ENCODE measurements at regions of chr9 and their contacts with region 1.

Region 1: DNA sequence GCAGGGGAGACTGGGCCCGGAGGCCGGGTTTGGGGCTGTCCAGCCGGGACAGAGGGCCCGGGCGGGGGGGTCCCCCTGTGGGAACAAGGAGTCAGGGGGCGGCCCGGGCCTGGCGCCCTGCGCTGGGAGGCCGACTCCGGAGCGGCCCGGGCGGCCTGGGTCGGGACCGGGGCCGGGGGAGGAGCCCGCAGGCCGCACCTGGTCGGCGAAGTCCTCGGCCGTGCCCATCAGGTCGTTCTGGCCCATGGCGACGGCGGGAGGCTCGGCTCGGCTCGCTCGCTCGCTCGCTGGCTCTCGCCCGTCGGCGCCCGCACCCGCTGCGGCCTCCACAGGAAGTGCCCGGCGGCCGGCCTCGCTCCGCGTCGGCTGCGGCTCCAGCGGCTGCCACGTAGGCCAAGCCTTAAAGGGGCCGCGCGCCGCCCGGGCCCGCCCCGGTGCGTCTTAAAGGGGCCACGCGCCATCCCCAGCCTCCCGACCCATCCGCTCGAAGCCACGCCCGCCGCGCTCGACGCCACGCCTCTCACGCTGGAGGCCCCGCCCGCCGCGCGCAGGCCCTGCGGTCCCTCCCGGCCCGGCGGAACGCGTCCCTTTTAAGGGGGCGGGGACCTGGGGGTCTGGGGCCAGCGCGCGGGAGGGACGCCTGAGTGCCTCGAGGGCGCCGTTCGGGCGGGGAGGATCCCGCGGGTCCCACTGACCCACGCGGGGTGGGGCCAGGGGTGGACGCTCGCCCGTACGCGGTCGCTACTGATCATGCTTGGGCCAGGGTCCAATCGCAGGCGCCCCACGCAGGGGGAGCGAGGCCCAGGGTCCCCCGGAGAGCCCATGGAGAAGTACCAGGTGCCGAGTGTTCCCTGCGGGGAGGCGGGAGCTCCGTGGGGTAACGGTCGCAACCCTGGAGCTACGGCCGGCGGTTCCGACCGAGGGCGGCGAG is at the starts of genes STKLD1 and SURF4:
- DNase-seq: peak; percentile 96
- H3K4me3 Mint-ChIP-seq: peak within 1 kb of the TSS; percentile 98
- H3K27ac Mint-ChIP-seq: peak within 1 kb of the TSS; percentile 97
- H3K4me1 Mint-ChIP-seq: peaks cover 33% of the 10 kb centered on the region
- H3K27me3 Mint-ChIP-seq: no peaks in the 10 kb centered on the region
- total RNA-seq, gene STKLD1: 0.35 to 0.41 TPM
- total RNA-seq, gene SURF4: 299 to 302 TPM

Region 2: GRCh38 chr9:132354637-132355355 is 1021.2 kb before region 1 on chr9 and contains the start of gene SETX:
- CTCF ChIA-PET with region 1: no interaction called
- intact Hi-C with region 1: loop called (anchors 5 kb)
- DNase-seq: peak; percentile 96
- H3K4me3 Mint-ChIP-seq: peak within 1 kb of the TSS; percentile 88
- H3K27ac Mint-ChIP-seq: peak within 1 kb of the TSS; percentile 95
- H3K4me1 Mint-ChIP-seq: peaks cover 35% of the 10 kb centered on the region
- H3K27me3 Mint-ChIP-seq: no peaks in the 10 kb centered on the region
- total RNA-seq, gene SETX: 26.4 to 26.7 TPM

Region 3: DNA sequence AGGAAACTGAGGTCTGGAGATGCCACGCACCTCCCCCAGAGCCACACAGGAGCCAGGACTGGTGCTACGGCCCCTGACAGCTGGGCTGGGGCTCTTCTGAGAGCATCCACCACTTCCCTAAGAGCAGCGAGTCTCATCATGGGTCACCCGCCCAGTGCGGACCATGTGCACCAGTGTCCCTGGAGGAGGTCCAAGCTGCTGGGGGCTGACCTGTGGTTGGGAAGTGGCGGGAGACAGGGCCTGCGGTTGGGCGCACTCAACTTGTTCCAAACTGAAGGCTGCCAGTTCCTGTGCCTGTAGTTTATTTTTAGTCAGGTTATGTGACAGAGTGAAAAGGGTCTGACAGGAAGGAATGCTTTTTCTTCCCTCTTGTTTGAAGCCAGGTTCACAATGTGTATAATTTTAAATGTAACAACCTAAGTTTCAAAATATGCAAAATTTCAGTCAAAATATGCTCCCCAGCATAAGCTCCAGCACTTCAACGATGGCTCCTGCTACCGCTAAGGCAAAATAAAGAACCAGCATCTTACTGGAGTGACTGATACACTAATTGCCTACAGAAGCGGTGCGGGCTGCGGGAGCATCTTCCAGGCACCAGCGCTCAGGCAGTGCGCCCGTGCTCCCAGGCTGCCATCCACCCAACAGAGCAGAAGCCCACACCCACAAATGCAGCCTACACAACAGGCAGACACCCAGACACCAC is 778.8 kb before region 1 on chr9:
- CTCF ChIA-PET with region 1: no interaction called
- intact Hi-C with region 1: no loop called
- DNase-seq: no peak
- H3K4me3 Mint-ChIP-seq: no peak overlapping the region
- H3K27ac Mint-ChIP-seq: no peak overlapping the region
- H3K4me1 Mint-ChIP-seq: no peaks in the 10 kb centered on the region
- H3K27me3 Mint-ChIP-seq: no peaks in the 10 kb centered on the region

Region 4: DNA sequence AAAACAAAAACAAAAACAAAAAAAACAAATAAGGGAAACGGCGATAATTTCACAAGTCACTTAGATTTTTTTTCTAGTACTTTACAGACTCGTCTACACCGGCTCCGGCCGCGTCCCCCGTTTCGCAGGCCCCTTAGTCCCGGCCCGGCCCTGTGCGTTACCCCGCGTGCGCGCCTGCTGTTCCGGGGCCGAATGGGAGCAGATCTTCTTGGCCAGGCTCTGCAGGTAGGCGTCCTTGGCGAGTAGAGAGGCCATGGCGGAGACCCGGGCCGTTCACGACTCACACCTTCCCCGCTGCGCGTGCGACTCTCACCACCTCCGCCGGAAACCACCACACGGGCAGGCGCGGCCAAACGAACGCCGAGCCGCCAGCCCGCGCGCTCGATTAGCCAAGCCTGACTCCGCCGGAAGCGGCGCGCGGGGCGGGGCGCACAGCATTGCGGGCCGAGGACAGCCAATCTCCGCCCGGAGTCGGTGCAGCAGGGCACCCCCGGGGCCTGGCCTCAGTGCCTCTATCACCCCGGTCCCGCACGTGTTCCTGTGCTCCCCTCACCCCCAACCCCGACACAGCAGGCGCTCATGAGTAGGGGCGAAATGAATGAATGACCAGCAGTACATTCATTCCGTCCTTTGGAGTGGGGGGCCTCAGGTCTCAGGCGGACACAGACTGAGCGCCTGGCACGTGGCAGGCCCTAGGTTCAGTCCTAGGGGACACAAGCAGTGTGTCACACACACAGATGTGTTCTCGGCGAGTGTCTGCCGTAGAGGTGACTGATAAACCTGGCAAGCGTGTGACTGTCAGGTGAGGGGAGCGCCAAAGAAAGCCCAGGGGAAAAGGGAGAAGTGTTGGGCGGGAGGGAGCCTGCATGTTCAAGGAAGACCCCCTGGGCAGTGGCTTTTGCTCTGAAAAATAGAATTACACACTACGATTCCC is 39.8 kb before region 1 on chr9 and contains the start of gene SURF6:
- CTCF ChIA-PET with region 1: interaction called, 5 read pairs
- intact Hi-C with region 1: loop called (anchors 1 kb)
- DNase-seq: peak; percentile 95
- H3K4me3 Mint-ChIP-seq: peak within 1 kb of the TSS; percentile 97
- H3K27ac Mint-ChIP-seq: peak within 1 kb of the TSS; percentile 87
- H3K4me1 Mint-ChIP-seq: peaks cover 40% of the 10 kb centered on the region
- H3K27me3 Mint-ChIP-seq: no peaks in the 10 kb centered on the region
- total RNA-seq, gene SURF6: 13.6 to 13.8 TPM

Region 5: DNA sequence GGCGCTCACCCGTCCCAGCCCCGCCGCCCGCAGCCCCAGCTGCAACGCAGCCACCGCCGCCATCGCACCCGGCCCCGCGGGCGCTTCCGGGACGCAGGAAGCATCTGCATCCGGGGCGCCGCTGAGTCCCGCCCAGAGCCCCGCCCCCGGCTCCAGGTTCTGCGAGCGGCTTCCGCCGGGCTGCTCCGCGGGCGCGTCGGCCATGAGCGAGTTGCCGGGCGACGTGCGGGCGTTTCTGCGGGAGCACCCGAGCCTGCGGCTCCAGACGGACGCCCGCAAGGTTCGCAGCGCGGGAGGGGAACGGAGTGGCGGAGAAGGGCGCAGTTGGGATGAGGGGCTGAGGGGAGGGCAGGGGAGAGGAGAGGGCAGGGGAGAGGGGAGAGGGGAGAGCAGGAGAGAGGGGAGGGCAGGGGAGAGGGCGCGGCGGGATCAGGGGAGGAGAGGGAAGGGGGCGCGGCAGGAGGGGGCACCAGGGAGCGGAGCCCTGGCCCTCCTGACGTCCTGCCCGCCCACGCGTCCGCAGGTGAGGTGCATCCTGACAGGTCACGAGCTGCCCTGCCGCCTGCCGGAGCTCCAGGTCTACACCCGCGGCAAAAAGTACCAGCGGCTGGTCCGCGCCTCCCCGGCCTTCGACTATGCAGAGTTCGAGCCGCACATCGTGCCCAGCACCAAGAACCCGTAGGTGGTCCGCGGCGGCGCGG is 19.4 kb before region 1 on chr9 and contains the starts of genes SURF1 and SURF2:
- CTCF ChIA-PET with region 1: interaction called, 48 read pairs
- intact Hi-C with region 1: loop called (anchors 1 kb)
- DNase-seq: peak; percentile 92
- H3K4me3 Mint-ChIP-seq: peak within 1 kb of the TSS; percentile 82
- H3K27ac Mint-ChIP-seq: peak within 1 kb of the TSS; percentile 81
- H3K4me1 Mint-ChIP-seq: peaks cover 50% of the 10 kb centered on the region
- H3K27me3 Mint-ChIP-seq: no peaks in the 10 kb centered on the region
- total RNA-seq, gene SURF1: 24.9 to 27.8 TPM
- total RNA-seq, gene SURF2: 15.0 to 16.2 TPM

Region 6: DNA sequence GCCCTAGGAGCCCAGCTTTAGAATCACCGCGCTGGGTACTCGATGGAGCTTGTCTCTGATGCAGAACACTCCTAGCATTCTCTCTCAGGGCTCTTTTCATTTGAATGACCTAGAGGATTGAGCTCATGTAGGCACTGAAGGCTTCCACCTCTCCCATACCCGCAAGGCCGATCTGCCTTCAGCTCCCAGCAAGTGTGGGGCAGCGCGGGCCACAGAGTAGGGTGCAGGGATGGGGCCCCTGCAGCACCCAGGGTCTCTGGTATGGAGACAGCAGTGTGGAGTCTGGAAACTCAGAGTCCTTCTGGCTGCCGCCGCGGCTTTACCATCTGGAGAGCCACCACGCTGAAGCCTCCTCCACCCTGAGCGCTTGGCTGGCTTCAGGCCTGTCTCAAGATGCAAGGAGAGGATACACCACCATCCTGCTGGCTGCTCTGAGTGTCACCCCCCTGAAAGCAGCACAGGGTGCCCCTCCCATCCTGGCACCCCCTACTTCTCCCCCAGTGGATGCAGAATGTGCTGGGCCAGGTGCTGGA is 13.1 kb after region 1 on chr9:
- CTCF ChIA-PET with region 1: no interaction called
- intact Hi-C with region 1: no loop called
- DNase-seq: no peak
- H3K4me3 Mint-ChIP-seq: no peak overlapping the region
- H3K27ac Mint-ChIP-seq: no peak overlapping the region
- H3K4me1 Mint-ChIP-seq: no peaks in the 10 kb centered on the region
- H3K27me3 Mint-ChIP-seq: no peaks in the 10 kb centered on the region

Region 7: DNA sequence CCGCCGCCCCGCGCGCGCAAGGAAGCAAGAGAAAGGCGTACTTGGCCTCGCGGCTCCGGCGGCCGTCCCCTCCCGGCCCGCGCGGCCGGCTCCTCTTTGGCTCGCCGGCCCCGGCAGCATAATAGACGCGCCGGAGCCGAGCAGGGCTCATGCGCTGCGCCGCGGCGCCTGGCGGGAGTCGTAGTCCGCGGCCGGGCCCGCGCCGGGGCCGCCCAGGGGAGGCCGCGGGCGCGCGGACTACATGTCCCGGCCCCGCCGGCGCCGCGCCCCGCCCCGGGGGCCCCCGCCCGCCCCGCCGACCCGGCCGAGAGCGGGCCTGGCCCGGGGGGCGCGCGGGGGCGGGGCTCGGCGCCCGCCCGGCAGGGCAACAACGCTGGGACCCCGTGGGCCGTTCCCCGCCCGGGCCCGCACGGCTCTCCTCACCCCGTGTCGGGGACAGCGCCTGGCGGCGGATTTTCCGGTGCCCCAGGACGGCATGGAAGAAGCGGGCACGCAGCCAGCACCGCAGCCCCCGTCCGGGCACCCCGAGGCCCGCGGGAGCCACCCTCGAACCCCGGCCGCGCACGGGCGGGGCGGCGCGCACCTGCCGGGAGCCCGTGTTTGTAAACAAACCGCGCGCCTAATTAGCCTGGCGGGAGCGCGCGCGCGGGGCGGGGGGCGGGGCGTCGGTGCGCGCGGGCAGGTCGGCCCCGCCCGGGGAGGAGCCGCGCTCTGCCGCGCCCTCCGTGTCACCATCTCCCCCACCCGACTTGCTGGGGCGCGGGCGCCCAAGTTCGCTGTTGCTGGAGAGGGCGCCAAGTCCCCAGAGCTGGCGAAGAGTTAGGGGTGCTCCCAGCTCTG is 692.1 kb after region 1 on chr9 and contains the start of gene BRD3:
- CTCF ChIA-PET with region 1: no interaction called
- intact Hi-C with region 1: loop called (anchors 5 kb)
- DNase-seq: peak; percentile 80
- H3K4me3 Mint-ChIP-seq: peak within 1 kb of the TSS; percentile 87
- H3K27ac Mint-ChIP-seq: peak within 1 kb of the TSS; percentile 80
- H3K4me1 Mint-ChIP-seq: peaks cover 29% of the 10 kb centered on the region
- H3K27me3 Mint-ChIP-seq: peaks cover 13% of the 10 kb centered on the region
- total RNA-seq, gene BRD3: 34.2 to 36.6 TPM